ENCODE measurements at regions of chr12 and their contacts with region 1.

Region 1: DNA sequence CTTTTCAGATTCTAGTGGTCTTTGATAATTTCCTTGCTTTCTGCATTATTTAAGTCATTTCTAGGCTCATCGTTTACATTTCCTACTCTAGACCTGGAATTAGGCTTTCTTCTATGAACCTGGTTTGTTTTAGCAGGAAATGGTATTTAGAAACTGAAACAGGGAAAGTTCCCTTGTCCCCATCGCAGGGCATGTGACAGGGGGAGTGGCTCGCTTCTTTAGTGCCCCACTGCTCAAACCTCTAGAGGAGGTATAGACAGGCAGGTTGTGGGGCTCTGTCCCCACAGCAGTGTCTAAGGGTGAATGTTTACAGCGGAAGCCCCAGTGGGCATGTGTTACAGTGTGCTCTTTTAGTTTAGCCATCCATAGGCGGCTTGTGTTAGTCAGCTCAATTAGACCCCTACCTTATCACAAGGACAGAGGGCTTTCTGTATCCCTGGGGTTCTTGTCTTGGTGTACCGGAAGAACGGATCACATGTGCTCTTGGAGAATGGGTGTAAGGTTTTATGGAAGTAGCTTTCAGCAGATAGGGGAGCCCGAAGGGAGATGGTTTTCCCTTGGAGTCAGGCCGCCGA is 25.0 kb downstream of the IFT81 start:
- DNase-seq: peak in 1 of 35 experiments; percentile 3
- ATAC-seq: no peak
- H3K4me3 ChIP-seq: no peak overlapping the region
- H3K4me3 Mint-ChIP-seq: no peak overlapping the region
- H3K27ac ChIP-seq: no peak overlapping the region
- H3K27ac Mint-ChIP-seq: no peak overlapping the region
- H3K4me1 ChIP-seq: no peaks in the 10 kb centered on the region
- H3K4me1 Mint-ChIP-seq: peaks cover 0 to 8% (median 7%) of the 10 kb centered on the region in 3 donors
- H3K27me3 ChIP-seq: no peaks in the 10 kb centered on the region
- H3K27me3 Mint-ChIP-seq: no peaks in the 10 kb centered on the region

Region 2: DNA sequence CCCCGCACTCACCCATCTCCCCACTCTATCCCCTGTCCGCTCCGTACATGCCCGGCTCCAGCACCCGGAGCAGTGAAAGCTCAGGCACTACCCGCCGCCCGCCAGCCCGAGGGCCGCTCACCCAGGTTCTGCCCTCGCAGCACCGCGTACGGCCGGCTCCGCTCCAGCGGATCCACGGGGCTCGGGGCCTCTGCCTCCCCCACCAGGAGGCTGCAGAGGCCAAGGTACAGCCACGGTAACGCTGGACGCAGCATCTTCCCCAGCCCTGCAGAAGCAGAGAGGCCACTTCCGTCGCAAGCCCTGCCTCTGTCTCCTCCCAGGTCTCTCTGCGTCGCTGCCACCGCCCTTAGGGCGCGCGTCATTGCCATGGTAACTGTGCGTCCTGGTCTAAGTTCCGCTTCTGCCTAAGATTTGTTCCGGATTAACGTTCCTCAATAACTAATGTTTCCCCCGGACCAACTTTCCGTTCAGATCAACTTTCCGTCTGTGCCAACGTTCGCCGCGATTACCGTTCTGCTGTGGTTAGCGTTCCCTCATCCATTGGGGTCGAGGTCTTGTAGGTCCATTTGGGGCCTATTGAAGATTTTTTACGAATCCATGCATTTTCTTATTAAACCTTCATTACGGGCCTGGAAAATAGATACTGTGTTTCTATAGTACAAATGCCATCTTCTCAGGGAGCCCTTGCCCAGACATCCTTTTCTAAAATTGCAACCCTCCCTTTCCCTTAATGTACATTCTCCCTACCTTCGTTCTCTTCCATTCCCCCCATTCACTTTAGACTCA is 100.7 kb before region 1 on chr12 and contains the start of gene C12orf76:
- CTCF ChIA-PET with region 1: no interaction called
- POLR2A ChIA-PET with region 1: no interaction called
- DNase-seq: peak; percentile 80 to 97 (median 88)
- ATAC-seq: peak; percentile 100
- H3K4me3 ChIP-seq: peak within 1 kb of the TSS; percentile 66 to 71
- H3K4me3 Mint-ChIP-seq: peak within 1 kb of the TSS; percentile 84 to 90 (median 87)
- H3K27ac ChIP-seq: peak within 1 kb of the TSS; percentile 75
- H3K27ac Mint-ChIP-seq: peak within 1 kb of the TSS; percentile 95 to 96
- H3K4me1 ChIP-seq: peaks cover 18 to 22% of the 10 kb centered on the region in 2 experiments
- H3K4me1 Mint-ChIP-seq: peaks cover 26 to 45% (median 37%) of the 10 kb centered on the region in 3 donors
- H3K27me3 ChIP-seq: no peaks in the 10 kb centered on the region
- H3K27me3 Mint-ChIP-seq: no peaks in the 10 kb centered on the region
- total RNA-seq, gene C12orf76: 13.6 to 31.0 (median 28.5) TPM

Region 3: GRCh38 chr12:110347767-110348166 is 198.6 kb after region 1 on chr12:
- CTCF ChIA-PET with region 1: no interaction called
- POLR2A ChIA-PET with region 1: interaction called in 1 of 2 experiments, 10 read pairs
- DNase-seq: no peak
- ATAC-seq: no peak
- H3K4me3 ChIP-seq: no peak overlapping the region
- H3K4me3 Mint-ChIP-seq: no peak overlapping the region
- H3K27ac ChIP-seq: no peak overlapping the region
- H3K27ac Mint-ChIP-seq: peak overlapping the region in 1 of 2 donors; percentile 28
- H3K4me1 ChIP-seq: peaks cover 17 to 19% of the 10 kb centered on the region in 2 experiments
- H3K4me1 Mint-ChIP-seq: peaks cover 22 to 35% (median 31%) of the 10 kb centered on the region in 3 donors
- H3K27me3 ChIP-seq: no peaks in the 10 kb centered on the region
- H3K27me3 Mint-ChIP-seq: no peaks in the 10 kb centered on the region